Activated CD8-positive, alpha-beta T cell treated with anti-CD3 and anti-CD28 coated beads, Interleukin-2, amount 10 ng/mL, durations not matched to agents 7 days and 5 days (primary cell): ENCODE measurements at regions of chr11 and their contacts with region 1.

Region 1: DNA sequence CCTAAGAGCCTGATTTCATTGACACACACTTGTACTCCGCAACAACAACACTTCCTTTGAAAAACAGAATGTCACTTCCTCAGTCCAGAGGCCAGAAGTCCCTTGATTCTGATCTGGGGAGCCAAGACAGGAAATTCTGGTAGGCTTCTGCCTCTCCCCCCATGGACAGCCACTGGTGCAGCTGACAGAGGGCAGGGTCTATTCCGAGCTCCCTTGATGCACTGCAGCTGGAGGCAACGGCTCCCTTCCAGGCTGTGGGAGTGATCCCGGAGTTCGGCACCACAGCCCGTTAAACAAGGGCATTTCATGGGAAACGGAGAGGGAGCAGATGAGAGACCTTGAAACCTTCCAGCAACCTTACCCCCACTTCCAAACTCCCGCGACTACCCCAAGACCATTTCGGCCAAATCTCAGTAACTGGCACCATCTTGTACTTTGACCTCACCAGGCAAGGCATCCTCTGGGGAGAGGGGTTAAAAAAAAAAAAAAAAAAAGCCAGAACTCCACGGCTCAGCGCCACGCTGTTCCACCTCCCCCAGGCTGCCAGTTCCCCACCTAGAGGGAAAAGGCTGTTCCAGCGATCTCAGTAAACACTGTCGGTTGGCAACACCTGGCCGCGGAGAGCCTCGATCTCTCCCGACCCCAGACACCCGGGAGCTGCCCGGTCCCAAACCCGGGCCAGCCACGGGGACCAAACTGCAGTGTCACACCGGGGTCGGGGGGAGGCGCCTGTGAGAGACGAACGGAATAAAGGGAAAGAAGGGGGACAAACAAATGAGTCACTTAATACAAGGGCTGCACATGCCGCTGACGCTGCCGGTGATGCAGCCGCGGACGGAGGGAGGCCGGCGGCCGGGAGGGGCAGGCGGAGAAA is 1.1 kb downstream of the GAB2 start:
- DNase-seq: peak; percentile 83
- ATAC-seq: peak; percentile 61
- H3K4me3 Mint-ChIP-seq: peak overlapping the region; percentile 93
- H3K27ac Mint-ChIP-seq: peak overlapping the region; percentile 84
- H3K4me1 Mint-ChIP-seq: peaks cover 43% of the 10 kb centered on the region
- H3K27me3 Mint-ChIP-seq: peaks cover 23% of the 10 kb centered on the region

Region 2: GRCh38 chr11:78228467-78228866 is 188.1 kb before region 1 on chr11:
- CTCF ChIA-PET with region 1: interaction called, 14 read pairs
- POLR2A ChIA-PET with region 1: no interaction called
- DNase-seq: peak; percentile 57
- ATAC-seq: no peak
- H3K4me3 Mint-ChIP-seq: no peak overlapping the region
- H3K27ac Mint-ChIP-seq: peak overlapping the region; percentile 8
- H3K4me1 Mint-ChIP-seq: peaks cover 49% of the 10 kb centered on the region
- H3K27me3 Mint-ChIP-seq: no peaks in the 10 kb centered on the region

Region 3: GRCh38 chr11:78432058-78432515 is 15.5 kb after region 1 on chr11:
- CTCF ChIA-PET with region 1: interaction called, 100 read pairs
- POLR2A ChIA-PET with region 1: interaction called, 6 read pairs
- DNase-seq: no peak
- ATAC-seq: no peak
- H3K4me3 Mint-ChIP-seq: no peak overlapping the region
- H3K27ac Mint-ChIP-seq: no peak overlapping the region
- H3K4me1 Mint-ChIP-seq: peaks cover 16% of the 10 kb centered on the region
- H3K27me3 Mint-ChIP-seq: no peaks in the 10 kb centered on the region

Region 4: DNA sequence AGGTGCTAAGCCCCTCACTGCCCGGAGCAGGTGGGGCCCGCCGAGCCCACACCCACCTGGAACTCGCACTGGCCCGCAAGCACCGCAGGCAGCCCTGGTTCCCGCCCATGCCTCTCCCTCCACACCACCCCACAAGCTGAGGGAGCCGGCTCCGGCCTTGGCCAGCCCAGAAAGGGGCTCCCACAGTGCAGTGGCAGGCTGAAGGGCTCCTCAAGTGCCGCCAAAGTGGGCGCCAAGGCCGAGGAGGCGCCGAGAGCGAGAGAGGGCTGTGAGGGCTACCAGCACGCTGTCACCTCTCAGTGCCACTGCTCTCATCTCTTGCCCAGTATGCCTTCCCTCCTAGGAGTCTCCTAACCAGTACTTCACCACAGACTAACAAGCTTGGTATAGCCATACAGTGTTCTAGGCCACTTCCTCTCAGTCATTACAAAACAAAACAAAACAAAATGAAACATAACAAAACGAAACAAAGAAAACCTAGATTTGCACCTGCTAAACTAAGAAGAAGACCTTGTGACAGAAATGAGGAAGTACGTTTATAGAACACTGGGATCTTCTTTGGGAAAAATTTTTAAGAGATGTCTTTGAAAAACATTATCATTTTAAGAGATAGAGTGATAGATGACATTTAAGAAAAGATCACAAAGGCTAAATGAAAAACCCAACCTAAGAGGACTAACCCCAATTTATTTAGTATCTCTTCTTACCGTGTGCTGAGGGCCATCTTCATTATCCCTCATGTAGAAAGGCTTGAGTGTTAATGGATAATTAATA is 48.8 kb after region 1 on chr11:
- CTCF ChIA-PET with region 1: interaction called, 10 read pairs
- POLR2A ChIA-PET with region 1: interaction called, 3 read pairs
- DNase-seq: peak; percentile 68
- ATAC-seq: peak; percentile 99
- H3K4me3 Mint-ChIP-seq: peak overlapping the region; percentile 63
- H3K27ac Mint-ChIP-seq: peak overlapping the region; percentile 89
- H3K4me1 Mint-ChIP-seq: peaks cover 35% of the 10 kb centered on the region
- H3K27me3 Mint-ChIP-seq: no peaks in the 10 kb centered on the region

Region 5: DNA sequence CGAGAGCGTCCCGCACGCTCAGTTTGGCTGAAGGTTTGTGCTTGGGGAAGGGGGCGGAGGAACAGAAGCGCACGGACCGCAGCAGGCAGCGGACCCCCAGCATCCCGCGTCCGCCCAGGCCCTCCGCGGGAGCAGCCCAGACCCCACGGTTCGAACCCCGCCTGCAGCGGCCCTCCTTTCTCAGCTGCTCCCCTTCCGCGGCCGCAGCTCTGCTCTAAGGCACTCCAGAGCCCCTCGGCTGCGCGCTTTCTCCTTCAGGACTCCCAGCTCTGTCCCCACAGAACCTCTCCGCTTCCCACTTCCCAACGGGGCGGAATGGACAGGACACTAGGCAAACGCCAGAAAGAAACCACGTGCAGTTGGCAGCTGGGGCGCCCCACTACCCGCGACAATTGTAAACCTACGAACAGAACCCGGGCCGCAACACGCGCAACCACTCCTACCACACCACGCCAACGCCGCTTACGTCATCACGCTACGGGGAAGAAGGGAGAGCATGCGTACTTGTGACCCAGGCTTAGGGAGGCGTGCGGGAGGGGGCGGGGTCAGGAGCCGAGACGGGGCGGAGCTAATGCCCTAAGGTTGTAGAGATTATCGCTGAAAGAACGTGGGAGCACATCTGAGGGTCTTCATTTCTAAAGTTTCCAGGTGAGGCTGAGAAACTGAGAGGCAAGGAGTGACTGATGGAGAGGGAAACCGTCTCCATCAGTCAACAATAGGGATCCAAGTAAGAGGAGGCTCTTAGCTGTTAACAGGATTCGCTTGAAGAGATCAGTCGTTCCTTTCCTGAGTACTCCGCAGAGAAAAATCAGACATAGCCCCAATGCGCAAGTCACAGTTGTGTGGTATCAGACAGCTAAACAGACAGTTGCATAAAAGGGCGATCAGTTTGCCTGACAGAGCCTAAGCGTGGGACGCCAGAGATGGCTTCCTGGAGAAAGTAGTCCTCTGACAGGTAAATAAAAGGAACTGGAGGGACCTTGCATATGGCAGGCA is 158.1 kb after region 1 on chr11 and contains the start of gene NARS2:
- CTCF ChIA-PET with region 1: interaction called, 26 read pairs
- POLR2A ChIA-PET with region 1: interaction called, 3 read pairs
- DNase-seq: peak; percentile 99
- ATAC-seq: peak; percentile 96
- H3K4me3 Mint-ChIP-seq: peak within 1 kb of the TSS; percentile 91
- H3K27ac Mint-ChIP-seq: peak within 1 kb of the TSS; percentile 87
- H3K4me1 Mint-ChIP-seq: peaks cover 32% of the 10 kb centered on the region
- H3K27me3 Mint-ChIP-seq: peaks cover 5% of the 10 kb centered on the region
- total RNA-seq, gene NARS2: 14.8 to 18.5 TPM